Activated CD4-positive, alpha-beta T cell treated with anti-CD3 and anti-CD28 coated beads for 36 hours (primary cell): ENCODE measurements at regions of chr5 and their contacts with region 1.

Region 1: GRCh38 chr5:131530706-131531331 is 104.2 kb downstream of the RAPGEF6 start:
- DNase-seq: no peak
- ATAC-seq: peak; percentile 25
- H3K4me3 Mint-ChIP-seq: peak overlapping the region; percentile 49
- H3K27ac Mint-ChIP-seq: peak overlapping the region; percentile 85
- H3K4me1 Mint-ChIP-seq: peaks cover 74% of the 10 kb centered on the region
- H3K27me3 Mint-ChIP-seq: no peaks in the 10 kb centered on the region

Region 2: DNA sequence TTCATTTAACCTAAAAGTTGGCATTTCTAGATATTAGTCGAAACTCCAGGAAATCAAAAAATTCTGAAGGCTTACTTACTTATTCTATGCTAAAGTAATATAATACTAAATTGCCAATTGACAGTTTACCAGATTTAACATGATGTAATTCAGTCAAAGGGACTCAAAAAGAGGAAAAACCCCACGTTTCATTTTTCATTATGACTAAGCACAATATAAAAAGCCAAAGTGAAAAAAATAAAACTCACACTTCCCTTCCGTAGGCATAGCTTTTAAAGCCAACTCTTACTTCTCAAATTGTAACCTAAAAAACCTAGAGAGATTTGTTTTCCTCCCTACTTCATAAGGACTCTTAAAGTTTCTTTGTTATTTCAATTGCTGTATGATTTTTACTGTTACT is 42.4 kb before region 1 on chr5:
- CTCF ChIA-PET with region 1: interaction called, 5 read pairs
- POLR2A ChIA-PET with region 1: interaction called, 10 read pairs
- intact Hi-C with region 1: loop called (anchors 2 to 10 kb)
- DNase-seq: no peak
- ATAC-seq: peak; percentile 85
- H3K4me3 Mint-ChIP-seq: peak overlapping the region; percentile 21
- H3K27ac Mint-ChIP-seq: peak overlapping the region; percentile 42
- H3K4me1 Mint-ChIP-seq: peaks cover 34% of the 10 kb centered on the region
- H3K27me3 Mint-ChIP-seq: no peaks in the 10 kb centered on the region

Region 3: GRCh38 chr5:132086277-132086794 is 555.5 kb after region 1 on chr5:
- CTCF ChIA-PET with region 1: no interaction called
- POLR2A ChIA-PET with region 1: no interaction called
- intact Hi-C with region 1: no loop called
- DNase-seq: peak; percentile 8
- ATAC-seq: no peak
- H3K4me3 Mint-ChIP-seq: no peak overlapping the region
- H3K27ac Mint-ChIP-seq: no peak overlapping the region
- H3K4me1 Mint-ChIP-seq: peaks cover 50% of the 10 kb centered on the region
- H3K27me3 Mint-ChIP-seq: peaks cover 5% of the 10 kb centered on the region